ENCODE measurements at regions of chr10 and their contacts with region 1.

Region 1: DNA sequence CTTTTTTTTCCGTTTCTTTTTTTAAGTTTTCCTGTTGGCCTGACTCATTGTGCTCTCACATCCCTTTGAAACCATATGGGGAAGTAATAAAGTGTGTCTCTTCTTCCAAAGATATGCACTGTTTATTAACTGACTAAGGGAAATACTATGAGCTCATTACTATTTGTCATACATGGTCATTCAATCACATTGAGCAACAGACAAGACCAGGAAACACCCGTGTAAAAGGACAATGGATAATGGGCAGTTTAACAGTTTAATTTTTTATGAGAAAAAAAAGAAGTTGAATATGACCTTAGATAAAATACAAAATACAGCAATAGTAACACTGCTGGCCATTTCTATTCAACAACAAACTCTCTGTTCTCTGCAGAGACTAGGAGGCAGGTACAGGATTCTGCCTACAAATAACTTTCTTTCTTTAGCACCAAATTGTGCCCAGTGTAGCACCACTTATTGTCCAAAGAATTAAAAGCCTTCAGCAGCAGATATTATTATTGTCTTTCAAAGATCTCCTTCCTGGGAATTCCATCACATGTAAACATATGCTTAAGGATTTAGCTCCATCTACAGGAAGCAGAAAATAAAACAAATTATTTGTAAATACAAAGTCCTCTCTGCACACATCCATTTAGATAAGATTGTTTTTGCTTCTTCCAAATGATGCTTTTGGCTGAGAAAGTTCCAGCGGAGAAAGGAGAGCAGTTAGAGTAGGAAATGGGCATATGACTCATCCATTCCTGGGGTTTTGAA is 55.0 kb upstream of the AKR1E2 start:
- DNase-seq: no peak
- H3K4me3 ChIP-seq: no peak overlapping the region
- H3K27ac ChIP-seq: peak overlapping the region; percentile 52
- H3K4me1 ChIP-seq: peaks cover 15% of the 10 kb centered on the region
- H3K27me3 ChIP-seq: no peaks in the 10 kb centered on the region
- CTCF ChIP-seq: peak in 1 of 3 experiments; percentile 36
- POLR2A ChIP-seq: no peak

Region 2: GRCh38 chr10:3197348-3198003 is 1573.5 kb before region 1 on chr10:
- intact Hi-C with region 1: loop called (anchors 5 kb)
- DNase-seq: no peak
- H3K4me3 ChIP-seq: peak overlapping the region in 1 of 2 donors; percentile 21
- H3K27ac ChIP-seq: peak overlapping the region; percentile 7
- H3K4me1 ChIP-seq: peaks cover 13% of the 10 kb centered on the region
- H3K27me3 ChIP-seq: no peaks in the 10 kb centered on the region
- CTCF ChIP-seq: peak; percentile 69 to 93 (median 83)
- POLR2A ChIP-seq: no peak